Activated T-helper 2 cell treated with anti-CD3 and anti-CD28 coated beads, Interferon-gamma antibody, Interleukin-2, Interleukin-4, amounts not matched to agents 10 μg/mL and 5 μg/mL and 100 μg/mL, durations not matched to agents 14 hours and 24 hours and 36 hours (primary cell): ENCODE measurements at regions of chr9 and their contacts with region 1.

Region 1: DNA sequence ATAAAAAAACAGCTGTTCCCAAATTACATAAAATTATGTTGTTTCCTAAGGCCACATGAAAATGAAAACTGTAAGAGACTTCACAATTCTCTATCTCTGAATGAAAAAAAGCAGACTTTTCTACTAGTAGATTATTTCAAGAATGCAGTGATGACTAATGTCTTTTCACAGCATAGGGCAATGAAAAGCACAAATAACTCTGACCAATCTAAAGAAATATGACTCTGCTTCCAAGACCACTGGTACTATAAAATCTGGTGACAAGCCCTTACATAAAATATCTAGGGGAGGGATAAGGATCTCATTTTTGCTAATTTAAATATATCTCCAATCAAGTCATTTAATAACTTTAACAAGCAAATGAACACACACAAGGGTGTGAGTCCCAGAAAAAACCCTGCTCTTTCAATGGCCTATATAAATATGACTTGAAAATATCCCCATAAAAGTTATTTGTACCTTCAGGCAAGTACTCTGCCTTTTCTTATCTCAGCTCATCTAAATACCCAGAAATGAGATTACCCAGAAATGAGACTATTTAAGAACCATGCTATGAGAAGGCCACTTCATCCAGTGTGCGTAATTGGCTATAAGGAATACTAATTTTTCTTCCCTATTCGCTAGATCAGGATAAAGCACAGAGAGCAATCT is 105.2 kb downstream of the GNAQ start:
- DNase-seq: no peak
- H3K4me3 Mint-ChIP-seq: peak overlapping the region; percentile 6
- H3K27ac Mint-ChIP-seq: peak overlapping the region; percentile 58
- H3K4me1 Mint-ChIP-seq: peaks cover 40% of the 10 kb centered on the region
- H3K27me3 Mint-ChIP-seq: no peaks in the 10 kb centered on the region

Region 2: GRCh38 chr9:77892171-77892570 is 34.3 kb before region 1 on chr9:
- intact Hi-C with region 1: loop called (anchors 5 kb)
- DNase-seq: no peak
- H3K4me3 Mint-ChIP-seq: no peak overlapping the region
- H3K27ac Mint-ChIP-seq: peak overlapping the region; percentile 77
- H3K4me1 Mint-ChIP-seq: peaks cover 32% of the 10 kb centered on the region
- H3K27me3 Mint-ChIP-seq: no peaks in the 10 kb centered on the region

Region 3: DNA sequence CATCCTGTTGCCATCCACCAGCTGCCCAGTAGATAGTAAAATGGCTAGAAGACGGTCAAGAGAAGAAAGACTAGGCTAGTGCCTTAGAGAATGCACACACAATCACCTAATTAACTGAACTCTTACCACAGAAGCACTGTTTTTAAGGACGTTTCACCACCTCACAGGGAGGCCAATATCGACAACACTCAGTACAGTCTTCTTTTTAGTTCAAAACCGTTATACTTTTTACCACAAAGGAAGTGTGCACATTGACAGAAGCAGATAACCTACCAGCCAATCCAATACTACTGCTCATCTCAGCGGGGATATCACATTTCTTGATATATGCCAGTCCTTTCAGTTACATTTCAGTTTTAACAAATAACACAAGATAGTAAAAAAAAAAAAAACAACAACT is 17.1 kb before region 1 on chr9:
- intact Hi-C with region 1: loop called (anchors 2 kb)
- DNase-seq: peak; percentile 41
- H3K4me3 Mint-ChIP-seq: peak overlapping the region; percentile 61
- H3K27ac Mint-ChIP-seq: peak overlapping the region; percentile 95
- H3K4me1 Mint-ChIP-seq: peaks cover 80% of the 10 kb centered on the region
- H3K27me3 Mint-ChIP-seq: no peaks in the 10 kb centered on the region

Region 4: DNA sequence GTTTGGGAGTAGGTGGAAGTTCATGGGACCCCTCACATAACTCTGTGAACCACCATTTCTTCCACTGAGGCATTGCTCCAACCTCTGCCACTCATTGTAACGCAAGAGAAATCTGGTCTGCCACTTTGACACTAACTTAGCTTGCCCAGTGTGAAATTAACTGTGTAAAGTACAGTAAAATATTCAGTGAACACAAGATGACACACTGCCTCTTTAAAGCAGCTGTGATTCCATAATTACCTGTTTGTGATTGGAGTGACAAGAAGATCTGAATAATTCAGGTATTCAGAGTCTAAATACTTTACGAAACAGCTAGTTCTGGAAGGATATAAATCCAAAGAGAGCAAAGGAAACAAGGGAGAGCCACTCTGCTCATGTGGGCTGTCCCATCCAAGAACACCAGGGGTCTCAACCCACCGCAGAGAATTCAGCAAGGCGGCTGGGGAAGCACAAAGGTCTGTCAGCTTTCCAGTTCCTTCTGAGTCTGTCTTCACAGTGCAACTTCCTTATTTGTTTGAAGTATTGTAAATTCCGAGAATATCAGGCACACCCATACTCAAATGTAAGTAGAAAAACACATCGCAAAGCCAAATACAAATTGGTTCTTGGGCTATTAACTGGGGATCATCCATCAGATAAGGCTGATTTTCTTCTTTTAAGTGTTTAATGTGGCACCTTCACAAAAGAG is 18.3 kb after region 1 on chr9:
- intact Hi-C with region 1: loop called (anchors 2 kb)
- DNase-seq: no peak
- H3K4me3 Mint-ChIP-seq: peak overlapping the region; percentile 10
- H3K27ac Mint-ChIP-seq: no peak overlapping the region
- H3K4me1 Mint-ChIP-seq: peaks cover 44% of the 10 kb centered on the region
- H3K27me3 Mint-ChIP-seq: no peaks in the 10 kb centered on the region

Region 5: GRCh38 chr9:77961541-77961940 is 35.1 kb after region 1 on chr9:
- intact Hi-C with region 1: no loop called
- DNase-seq: no peak
- H3K4me3 Mint-ChIP-seq: no peak overlapping the region
- H3K27ac Mint-ChIP-seq: no peak overlapping the region
- H3K4me1 Mint-ChIP-seq: peaks cover 38% of the 10 kb centered on the region
- H3K27me3 Mint-ChIP-seq: no peaks in the 10 kb centered on the region

Region 6: DNA sequence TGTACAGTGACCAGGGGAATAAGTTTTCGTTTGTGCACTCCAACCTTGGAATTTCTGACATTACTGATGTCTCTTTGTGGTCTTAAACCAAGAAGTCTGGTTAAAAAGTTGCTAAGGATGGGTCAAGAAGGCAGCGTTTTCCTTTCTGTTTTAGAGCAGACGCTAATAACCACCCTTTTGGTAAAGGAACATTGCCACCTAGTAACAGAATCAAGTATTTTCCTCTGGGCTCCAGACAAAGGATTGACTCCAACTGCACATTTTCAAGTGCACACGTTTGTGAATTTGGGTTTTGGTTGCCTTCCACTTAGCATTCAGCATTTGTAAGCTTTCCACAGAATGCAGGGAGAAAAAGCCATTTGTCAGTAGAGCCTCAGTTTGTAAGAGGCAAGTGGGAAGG is 287.3 kb after region 1 on chr9:
- intact Hi-C with region 1: no loop called
- DNase-seq: no peak
- H3K4me3 Mint-ChIP-seq: no peak overlapping the region
- H3K27ac Mint-ChIP-seq: no peak overlapping the region
- H3K4me1 Mint-ChIP-seq: peaks cover 26% of the 10 kb centered on the region
- H3K27me3 Mint-ChIP-seq: no peaks in the 10 kb centered on the region